Activated CD4-positive, alpha-beta T cell treated with anti-CD3 and anti-CD28 coated beads for 36 hours (primary cell): ENCODE measurements at regions of chr11 and their contacts with region 1.

Region 1: GRCh38 chr11:61827571-61828378 is at the start of gene FADS2:
- DNase-seq: peak; percentile 90
- ATAC-seq: peak; percentile 86
- H3K4me3 Mint-ChIP-seq: peak within 1 kb of the TSS; percentile 84
- H3K27ac Mint-ChIP-seq: peak within 1 kb of the TSS; percentile 74
- H3K4me1 Mint-ChIP-seq: peaks cover 12% of the 10 kb centered on the region
- H3K27me3 Mint-ChIP-seq: peaks cover 40% of the 10 kb centered on the region
- total RNA-seq, gene FADS2: 51.0 to 58.4 TPM

Region 2: GRCh38 chr11:61816736-61817455 is 10.9 kb before region 1 on chr11 and contains the start of gene FADS1:
- CTCF ChIA-PET with region 1: interaction called, 8 read pairs
- POLR2A ChIA-PET with region 1: interaction called, 4 read pairs
- intact Hi-C with region 1: loop called in 1 of 2 experiments (anchors 1 kb)
- DNase-seq: peak; percentile 92
- ATAC-seq: peak; percentile 67
- H3K4me3 Mint-ChIP-seq: peak within 1 kb of the TSS; percentile 89
- H3K27ac Mint-ChIP-seq: peak within 1 kb of the TSS; percentile 80
- H3K4me1 Mint-ChIP-seq: peaks cover 7% of the 10 kb centered on the region
- H3K27me3 Mint-ChIP-seq: peaks cover 25% of the 10 kb centered on the region
- total RNA-seq, gene FADS1: 18.9 to 23.7 TPM

Region 3: GRCh38 chr11:61874458-61874809 is 46.7 kb after region 1 on chr11:
- CTCF ChIA-PET with region 1: no interaction called
- POLR2A ChIA-PET with region 1: no interaction called
- intact Hi-C with region 1: no loop called
- DNase-seq: no peak
- ATAC-seq: no peak
- H3K4me3 Mint-ChIP-seq: no peak overlapping the region
- H3K27ac Mint-ChIP-seq: no peak overlapping the region
- H3K4me1 Mint-ChIP-seq: peaks cover 2% of the 10 kb centered on the region
- H3K27me3 Mint-ChIP-seq: peaks cover 3% of the 10 kb centered on the region